IMR-90 (cell line): ENCODE measurements at regions of chr2 and their contacts with region 1.

Region 1: GRCh38 chr2:11446733-11447248 is 19.2 kb downstream of the E2F6 start:
- DNase-seq: peak; percentile 67
- ATAC-seq: peak; percentile 92
- H3K4me3 ChIP-seq: no peak overlapping the region
- H3K27ac ChIP-seq: no peak overlapping the region
- H3K4me1 ChIP-seq: no peaks in the 10 kb centered on the region
- H3K27me3 ChIP-seq: no peaks in the 10 kb centered on the region
- CTCF ChIP-seq: peak; percentile 76
- POLR2A ChIP-seq: no peak
- RAD21 ChIP-seq: peak; percentile 86

Region 2: DNA sequence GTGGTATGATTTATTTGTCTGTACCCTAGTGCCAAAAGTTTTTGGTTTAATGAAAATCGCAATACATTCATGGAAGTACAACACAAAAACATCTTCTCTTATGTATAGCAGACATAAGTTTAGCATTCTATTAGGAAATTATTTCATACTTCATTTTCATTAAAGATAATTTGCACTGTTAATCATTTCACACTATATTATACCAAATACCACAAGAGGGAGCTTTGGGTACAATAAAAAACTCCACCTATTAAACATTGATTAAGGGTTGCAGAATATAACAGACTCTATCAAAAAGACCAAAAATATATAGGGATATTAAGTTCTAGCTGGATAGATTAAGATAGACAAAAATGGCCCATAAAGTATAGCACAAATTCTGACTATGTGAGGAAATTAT is 212.5 kb before region 1 on chr2:
- CTCF ChIA-PET with region 1: interaction called, 6 read pairs
- POLR2A ChIA-PET with region 1: no interaction called
- dilution Hi-C with region 1: no loop called
- in situ Hi-C with region 1: no loop called
- intact Hi-C with region 1: loop called (anchors 2 kb)
- DNase-seq: peak; percentile 28
- ATAC-seq: peak; percentile 62
- H3K4me3 ChIP-seq: no peak overlapping the region
- H3K27ac ChIP-seq: no peak overlapping the region
- H3K4me1 ChIP-seq: no peaks in the 10 kb centered on the region
- H3K27me3 ChIP-seq: no peaks in the 10 kb centered on the region
- CTCF ChIP-seq: peak; percentile 62
- POLR2A ChIP-seq: no peak
- RAD21 ChIP-seq: peak; percentile 71

Region 3: GRCh38 chr2:11642974-11643373 is 196.2 kb after region 1 on chr2:
- CTCF ChIA-PET with region 1: no interaction called
- POLR2A ChIA-PET with region 1: no interaction called
- dilution Hi-C with region 1: no loop called
- in situ Hi-C with region 1: no loop called
- intact Hi-C with region 1: no loop called
- DNase-seq: no peak
- ATAC-seq: no peak
- H3K4me3 ChIP-seq: no peak overlapping the region
- H3K27ac ChIP-seq: no peak overlapping the region
- H3K4me1 ChIP-seq: no peaks in the 10 kb centered on the region
- H3K27me3 ChIP-seq: peaks cover 30% of the 10 kb centered on the region
- CTCF ChIP-seq: no peak
- POLR2A ChIP-seq: no peak
- RAD21 ChIP-seq: no peak

Region 4: GRCh38 chr2:12176623-12177454 is 730.0 kb after region 1 on chr2:
- CTCF ChIA-PET with region 1: no interaction called
- POLR2A ChIA-PET with region 1: no interaction called
- dilution Hi-C with region 1: no loop called
- in situ Hi-C with region 1: no loop called
- intact Hi-C with region 1: no loop called
- DNase-seq: peak; percentile 76
- ATAC-seq: peak; percentile 87
- H3K4me3 ChIP-seq: no peak overlapping the region
- H3K27ac ChIP-seq: no peak overlapping the region; the same call in 1 of the 2 replicates
- H3K4me1 ChIP-seq: peaks cover 11% of the 10 kb centered on the region
- H3K27me3 ChIP-seq: no peaks in the 10 kb centered on the region
- CTCF ChIP-seq: no peak
- POLR2A ChIP-seq: no peak
- RAD21 ChIP-seq: no peak